Head of caudate nucleus (tissue), 42 donors: ENCODE measurements at regions of chr9 and their contacts with region 1.

Region 1: DNA sequence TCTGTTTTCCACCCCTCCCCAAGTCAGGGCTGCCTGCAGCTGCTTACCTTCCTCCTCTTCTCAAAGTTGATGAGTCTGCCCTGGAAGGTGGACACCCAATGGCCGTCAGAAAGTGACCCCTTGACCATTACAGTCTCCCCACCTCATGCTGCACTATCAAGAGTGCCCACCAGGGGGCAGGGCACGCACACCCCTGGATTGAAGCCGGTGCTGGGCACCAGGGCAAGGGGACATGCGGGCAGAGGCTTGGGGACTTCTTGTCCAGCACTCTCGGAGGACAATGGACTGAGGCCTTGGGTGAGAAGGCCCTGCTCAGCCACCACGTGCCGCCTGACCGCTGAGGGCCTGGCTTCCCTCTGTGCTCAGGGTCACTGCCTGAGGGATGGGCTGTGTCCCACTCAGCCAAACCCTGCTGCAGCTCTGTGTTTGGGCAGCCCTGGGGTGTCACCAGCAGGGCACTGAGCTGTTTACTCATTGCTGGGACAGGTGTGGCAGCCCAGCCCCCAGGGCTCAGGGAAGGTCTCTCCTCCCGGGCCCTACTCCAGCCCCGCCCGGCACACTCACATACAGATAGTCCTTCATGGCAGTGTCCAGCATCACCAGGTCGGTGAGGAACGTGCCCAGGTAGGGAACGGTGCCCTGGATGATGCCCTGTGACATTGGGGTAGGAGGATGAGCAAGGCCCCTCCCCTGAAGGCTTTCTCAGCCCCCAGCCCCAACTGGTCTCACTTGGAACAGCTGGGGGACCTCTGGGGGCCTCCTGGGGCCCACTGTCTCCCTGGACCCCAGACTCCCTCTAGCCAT is 17.7 kb downstream of the RALGDS start:
- DNase-seq: peak; percentile 46 to 93 (median 80)

Region 2: DNA sequence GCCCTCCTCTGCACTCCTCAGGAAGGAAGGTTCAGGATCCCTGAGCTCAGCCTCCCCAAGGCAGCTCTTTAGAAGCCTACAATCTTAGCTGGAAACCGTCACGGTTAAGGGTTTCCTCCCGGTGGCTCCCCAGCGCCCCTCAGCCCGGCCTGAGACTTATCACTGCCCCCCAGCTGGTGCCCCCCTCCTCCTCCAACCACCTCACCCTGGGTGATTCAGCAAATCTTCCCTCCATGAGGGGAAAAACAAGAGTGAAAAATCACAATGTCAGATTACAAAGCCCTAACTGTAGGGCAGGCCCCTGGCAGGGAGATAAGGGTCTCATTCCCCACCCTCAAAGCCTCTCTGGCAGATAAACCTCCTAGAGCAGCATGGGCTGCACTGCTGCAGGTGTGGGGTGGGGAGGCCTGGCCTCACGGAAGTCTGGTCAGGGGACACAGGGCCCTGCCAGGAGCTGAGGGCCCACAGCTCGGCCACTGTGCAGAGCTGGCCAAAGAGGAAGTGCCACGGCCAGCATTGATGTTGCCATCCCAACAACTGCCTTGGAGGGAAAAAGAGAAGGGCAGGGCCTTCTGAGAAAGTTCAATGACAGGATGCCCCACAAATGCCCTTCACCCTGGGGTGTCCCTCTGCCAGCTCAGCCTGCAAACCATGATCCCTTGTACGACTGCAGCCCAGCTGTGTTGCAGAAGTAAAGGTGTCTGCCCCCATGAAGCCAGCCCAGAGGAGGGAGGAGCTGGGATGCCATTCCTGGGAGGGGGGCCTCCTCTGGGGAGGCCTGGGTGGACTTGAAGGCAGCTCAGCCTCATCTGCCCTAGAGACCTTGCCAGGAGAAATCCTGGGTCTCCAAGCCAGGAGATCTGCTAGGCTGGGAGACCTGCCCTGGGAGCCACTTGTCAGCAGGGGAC is 99.0 kb before region 1 on chr9:
- intact Hi-C with region 1: no loop called
- DNase-seq: peak in 4 of 42 donors; percentile 7 to 44 (median 22)

Region 3: DNA sequence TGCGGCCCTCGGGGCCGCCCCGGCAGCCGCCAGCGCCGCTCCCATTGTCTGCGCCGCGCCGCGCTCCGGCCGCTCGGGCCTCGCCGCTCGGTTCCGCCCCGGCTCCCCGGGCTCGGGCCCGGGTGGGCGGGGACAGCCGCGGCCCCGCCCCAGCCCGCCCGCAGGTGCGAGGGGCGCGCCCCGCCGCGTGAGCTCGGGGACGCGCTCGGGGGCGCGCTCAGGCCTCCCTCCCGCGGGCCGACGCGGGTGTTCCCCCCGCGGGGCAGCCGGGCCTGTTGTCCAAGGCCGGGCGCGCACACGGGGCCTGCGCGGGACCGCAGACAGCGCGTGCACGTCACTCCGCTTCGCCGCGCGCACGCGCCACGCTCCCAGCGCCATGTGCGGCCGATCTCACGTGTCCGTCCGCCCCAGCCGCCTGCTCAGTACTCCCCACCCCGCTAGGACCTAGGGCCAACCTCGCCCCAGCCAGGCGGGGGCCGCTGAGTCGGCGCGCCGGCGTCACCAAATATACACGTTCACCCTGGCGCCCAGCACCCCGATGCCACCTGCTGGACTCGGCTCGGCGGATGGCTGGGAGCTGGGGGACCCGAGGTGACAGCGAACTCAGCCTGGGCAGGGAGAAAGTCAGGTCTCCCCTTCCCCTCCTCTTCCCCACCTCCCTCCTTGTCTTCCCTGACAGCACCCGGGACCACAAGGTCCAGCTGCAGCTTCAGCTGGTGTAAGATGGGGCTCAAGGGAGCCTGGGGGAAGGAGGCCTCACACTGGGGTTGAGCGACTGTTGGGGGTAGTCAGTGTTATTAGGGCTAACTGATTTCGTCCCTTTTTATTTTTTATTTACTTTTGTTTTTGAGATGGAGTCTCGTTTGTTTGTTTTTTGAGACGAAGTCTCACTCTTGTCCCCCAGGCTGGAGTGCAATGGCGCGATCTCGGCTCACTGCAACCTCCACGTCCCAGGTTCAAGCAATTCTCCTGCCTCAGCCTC is 46.0 kb after region 1 on chr9:
- intact Hi-C with region 1: loop called (anchors 5 kb)
- DNase-seq: peak; percentile 71 to 95 (median 86)

Region 4: GRCh38 chr9:133261103-133261752 is 157.8 kb after region 1 on chr9:
- intact Hi-C with region 1: no loop called
- DNase-seq: peak in 1 of 42 donors; percentile 9